CD4-positive, alpha-beta T cell (primary cell): ENCODE measurements at regions of chr7 and their contacts with region 1.

Region 1: DNA sequence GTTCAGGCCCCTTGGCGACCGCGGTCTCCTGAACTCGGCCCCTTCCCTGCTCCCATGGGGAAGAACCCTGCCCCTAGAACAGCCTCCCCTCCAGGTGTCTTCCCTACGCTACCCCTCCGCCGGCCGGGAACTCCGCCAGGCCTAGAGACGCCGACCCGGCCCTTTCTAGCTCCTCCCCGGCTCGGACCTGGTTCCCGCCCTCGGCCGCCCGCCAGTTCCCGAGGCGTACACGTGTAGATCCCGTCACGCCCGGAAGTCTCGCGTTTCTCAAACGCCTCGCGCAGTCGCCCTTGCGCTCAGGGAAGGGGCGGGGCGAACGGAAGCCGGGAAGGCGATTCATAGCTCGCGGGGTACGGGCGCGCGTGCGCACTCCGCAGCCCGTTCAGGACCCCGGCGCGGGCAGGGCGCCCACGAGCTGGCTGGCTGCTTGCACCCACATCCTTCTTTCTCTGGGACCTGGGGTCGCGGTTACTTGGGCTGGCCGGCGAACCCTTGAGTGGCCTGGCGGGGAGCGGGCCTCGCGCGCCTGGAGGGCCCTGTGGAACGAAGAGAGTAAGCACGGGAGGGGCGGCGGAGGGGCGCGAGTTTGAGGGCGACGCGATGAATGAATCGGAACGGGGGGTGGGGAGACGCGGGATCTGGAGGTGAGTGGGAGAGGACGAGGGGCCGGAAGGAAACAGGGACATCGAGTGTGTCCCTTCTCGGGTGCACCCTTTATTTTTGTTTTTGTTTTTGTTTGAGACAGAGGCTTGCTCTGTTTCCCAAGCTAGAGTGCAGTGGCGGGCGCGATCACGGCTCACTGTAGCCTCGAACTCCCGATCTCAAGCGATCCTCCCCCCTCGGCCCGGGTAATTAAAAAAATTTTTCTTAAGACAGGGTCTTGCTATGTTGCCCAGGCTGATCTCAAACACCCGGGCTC is at the start of gene POP7:
- DNase-seq: peak; percentile 95 to 99 (median 98)
- ATAC-seq: peak; percentile 93
- H3K4me3 ChIP-seq: peak within 1 kb of the TSS; percentile 100
- H3K4me3 Mint-ChIP-seq: peak within 1 kb of the TSS; percentile 98
- H3K27ac ChIP-seq: peak within 1 kb of the TSS; percentile 82 to 93
- H3K27ac Mint-ChIP-seq: peak within 1 kb of the TSS; percentile 85
- H3K4me1 ChIP-seq: peaks cover 24% of the 10 kb centered on the region
- H3K4me1 Mint-ChIP-seq: peaks cover 14% of the 10 kb centered on the region
- H3K27me3 ChIP-seq: no peaks in the 10 kb centered on the region
- H3K27me3 Mint-ChIP-seq: no peaks in the 10 kb centered on the region
- CTCF ChIP-seq: no peak
- total RNA-seq, gene POP7: 7.4 to 7.5 TPM

Region 2: DNA sequence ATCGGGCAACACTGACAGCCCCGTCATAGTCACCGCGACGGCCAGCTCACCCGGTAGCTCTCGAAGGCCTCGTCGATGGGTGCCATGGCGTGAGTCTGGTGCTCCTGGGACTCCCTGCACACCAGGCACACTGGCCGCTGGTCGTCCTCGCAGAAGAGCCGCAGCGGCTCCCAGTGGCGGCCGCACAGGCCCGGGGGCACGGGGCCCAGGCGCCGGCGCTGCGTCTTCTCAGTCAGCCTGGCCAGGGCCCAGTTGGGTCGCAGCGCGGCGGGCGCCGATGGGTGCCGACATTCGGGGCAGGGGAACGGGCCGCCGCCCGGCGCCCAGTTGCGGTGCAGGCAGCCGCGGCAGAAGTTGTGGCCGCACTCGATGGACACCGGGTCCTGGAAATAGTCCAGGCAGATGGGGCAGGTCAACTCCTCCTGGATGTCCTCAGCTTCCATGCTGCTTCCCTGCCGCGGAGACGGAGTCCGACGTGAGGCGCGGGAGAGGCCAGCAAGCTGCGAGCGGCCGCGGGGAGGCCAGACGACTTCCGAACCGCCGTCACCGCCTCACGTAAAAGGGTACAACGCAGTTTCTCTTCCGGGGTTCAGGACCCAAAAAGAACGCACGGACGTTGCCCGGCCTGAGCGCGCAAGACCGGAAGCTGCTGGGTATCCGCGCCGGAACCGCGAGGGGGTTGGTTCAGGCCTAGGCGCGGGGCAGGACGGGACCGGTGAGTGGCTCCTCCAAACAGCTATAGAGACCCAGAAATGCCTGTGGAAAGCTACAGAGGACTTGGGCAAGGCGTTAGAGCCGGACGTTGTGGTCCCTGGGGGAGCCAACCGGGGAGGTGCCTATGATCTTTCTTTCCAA is 786.8 kb before region 1 on chr7 and contains the start of gene TRIM4:
- CTCF ChIA-PET with region 1: no interaction called
- POLR2A ChIA-PET with region 1: no interaction called
- intact Hi-C with region 1: no loop called
- DNase-seq: peak; percentile 78 to 95 (median 86)
- ATAC-seq: peak; percentile 97
- H3K4me3 ChIP-seq: peak within 1 kb of the TSS; percentile 80
- H3K4me3 Mint-ChIP-seq: peak within 1 kb of the TSS; percentile 97
- H3K27ac ChIP-seq: peak within 1 kb of the TSS; percentile 78 to 80
- H3K27ac Mint-ChIP-seq: peak within 1 kb of the TSS; percentile 98
- H3K4me1 ChIP-seq: peaks cover 39% of the 10 kb centered on the region
- H3K4me1 Mint-ChIP-seq: peaks cover 61% of the 10 kb centered on the region
- H3K27me3 ChIP-seq: no peaks in the 10 kb centered on the region
- H3K27me3 Mint-ChIP-seq: no peaks in the 10 kb centered on the region
- CTCF ChIP-seq: peak; percentile 13
- total RNA-seq, gene TRIM4: 22.8 to 23.1 TPM

Region 3: GRCh38 chr7:100611974-100612729 is 93.9 kb before region 1 on chr7 and contains the start of gene MOSPD3:
- CTCF ChIA-PET with region 1: interaction called, 11 read pairs
- POLR2A ChIA-PET with region 1: interaction called, 22 read pairs
- intact Hi-C with region 1: no loop called
- DNase-seq: peak; percentile 95 to 99 (median 98)
- ATAC-seq: peak; percentile 87
- H3K4me3 ChIP-seq: peak within 1 kb of the TSS; percentile 62
- H3K4me3 Mint-ChIP-seq: peak within 1 kb of the TSS; percentile 94
- H3K27ac ChIP-seq: peak within 1 kb of the TSS; percentile 78 to 92
- H3K27ac Mint-ChIP-seq: peak within 1 kb of the TSS; percentile 97
- H3K4me1 ChIP-seq: peaks cover 27% of the 10 kb centered on the region
- H3K4me1 Mint-ChIP-seq: peaks cover 31% of the 10 kb centered on the region
- H3K27me3 ChIP-seq: no peaks in the 10 kb centered on the region
- H3K27me3 Mint-ChIP-seq: no peaks in the 10 kb centered on the region
- CTCF ChIP-seq: no peak
- total RNA-seq, gene MOSPD3: 8.5 to 10.9 TPM

Region 4: GRCh38 chr7:100680167-100680575 is 25.8 kb before region 1 on chr7:
- CTCF ChIA-PET with region 1: interaction called, 8 read pairs
- POLR2A ChIA-PET with region 1: interaction called, 20 read pairs
- intact Hi-C with region 1: no loop called
- DNase-seq: peak in 1 of 14 experiments; percentile 61
- ATAC-seq: no peak
- H3K4me3 ChIP-seq: no peak overlapping the region
- H3K4me3 Mint-ChIP-seq: peak overlapping the region; percentile 16
- H3K27ac ChIP-seq: peak overlapping the region; percentile 1 to 30
- H3K27ac Mint-ChIP-seq: peak overlapping the region; percentile 81
- H3K4me1 ChIP-seq: peaks cover 43% of the 10 kb centered on the region
- H3K4me1 Mint-ChIP-seq: peaks cover 46% of the 10 kb centered on the region
- H3K27me3 ChIP-seq: no peaks in the 10 kb centered on the region
- H3K27me3 Mint-ChIP-seq: no peaks in the 10 kb centered on the region
- CTCF ChIP-seq: no peak

Region 5: GRCh38 chr7:100837099-100837836 is 131.3 kb after region 1 on chr7:
- CTCF ChIA-PET with region 1: no interaction called
- POLR2A ChIA-PET with region 1: no interaction called
- intact Hi-C with region 1: loop called in 1 of 2 experiments (anchors 5 kb)
- DNase-seq: peak; percentile 56 to 87 (median 76)
- ATAC-seq: peak; percentile 99
- H3K4me3 ChIP-seq: peak overlapping the region; percentile 61
- H3K4me3 Mint-ChIP-seq: peak overlapping the region; percentile 85
- H3K27ac ChIP-seq: peak overlapping the region in 1 of 2 donors; percentile 10
- H3K27ac Mint-ChIP-seq: peak overlapping the region; percentile 76
- H3K4me1 ChIP-seq: peaks cover 16% of the 10 kb centered on the region
- H3K4me1 Mint-ChIP-seq: peaks cover 10% of the 10 kb centered on the region
- H3K27me3 ChIP-seq: no peaks in the 10 kb centered on the region
- H3K27me3 Mint-ChIP-seq: no peaks in the 10 kb centered on the region
- CTCF ChIP-seq: no peak

Region 6: GRCh38 chr7:100889761-100890634 is 184.0 kb after region 1 on chr7:
- CTCF ChIA-PET with region 1: no interaction called
- POLR2A ChIA-PET with region 1: interaction called, 12 read pairs
- intact Hi-C with region 1: no loop called
- DNase-seq: peak; percentile 82 to 97 (median 90)
- ATAC-seq: peak; percentile 87
- H3K4me3 ChIP-seq: peak overlapping the region; percentile 73
- H3K4me3 Mint-ChIP-seq: peak overlapping the region; percentile 95
- H3K27ac ChIP-seq: peak overlapping the region in 1 of 2 donors; percentile 50
- H3K27ac Mint-ChIP-seq: peak overlapping the region; percentile 66
- H3K4me1 ChIP-seq: peaks cover 68% of the 10 kb centered on the region
- H3K4me1 Mint-ChIP-seq: peaks cover 52% of the 10 kb centered on the region
- H3K27me3 ChIP-seq: peaks cover 24 to 41% of the 10 kb centered on the region in 2 experiments
- H3K27me3 Mint-ChIP-seq: peaks cover 36% of the 10 kb centered on the region
- CTCF ChIP-seq: no peak

Region 7: GRCh38 chr7:101165075-101165957 is 459.3 kb after region 1 on chr7 and contains the start of gene VGF:
- CTCF ChIA-PET with region 1: no interaction called
- POLR2A ChIA-PET with region 1: no interaction called
- intact Hi-C with region 1: loop called in 1 of 2 experiments (anchors 5 kb)
- DNase-seq: peak; percentile 85 to 97 (median 92)
- ATAC-seq: peak; percentile 85
- H3K4me3 ChIP-seq: peak within 1 kb of the TSS; percentile 19
- H3K4me3 Mint-ChIP-seq: peak within 1 kb of the TSS; percentile 74
- H3K27ac ChIP-seq: no peak within 1 kb of the TSS
- H3K27ac Mint-ChIP-seq: peak within 1 kb of the TSS; percentile 14
- H3K4me1 ChIP-seq: peaks cover 58% of the 10 kb centered on the region
- H3K4me1 Mint-ChIP-seq: peaks cover 43% of the 10 kb centered on the region
- H3K27me3 ChIP-seq: peaks cover 78 to 83% of the 10 kb centered on the region in 2 experiments
- H3K27me3 Mint-ChIP-seq: peaks cover 80% of the 10 kb centered on the region
- CTCF ChIP-seq: no peak
- total RNA-seq, gene VGF: not detected

Region 8: GRCh38 chr7:101442521-101442981 is 736.5 kb after region 1 on chr7:
- CTCF ChIA-PET with region 1: no interaction called
- POLR2A ChIA-PET with region 1: no interaction called
- intact Hi-C with region 1: no loop called
- DNase-seq: no peak
- ATAC-seq: no peak
- H3K4me3 ChIP-seq: no peak overlapping the region
- H3K4me3 Mint-ChIP-seq: no peak overlapping the region
- H3K27ac ChIP-seq: no peak overlapping the region
- H3K27ac Mint-ChIP-seq: no peak overlapping the region
- H3K4me1 ChIP-seq: no peaks in the 10 kb centered on the region
- H3K4me1 Mint-ChIP-seq: peaks cover 6% of the 10 kb centered on the region
- H3K27me3 ChIP-seq: peaks cover 0 to 3% of the 10 kb centered on the region in 2 experiments
- H3K27me3 Mint-ChIP-seq: peaks cover 16% of the 10 kb centered on the region
- CTCF ChIP-seq: no peak